ENCODE measurements at regions of chr1 and their contacts with region 1.

Region 1: GRCh38 chr1:81800695-81801650 is at the start of gene ADGRL2:
- DNase-seq: peak; percentile 89
- total RNA-seq, gene ADGRL2: 40.6 to 58.9 TPM

Region 2: DNA sequence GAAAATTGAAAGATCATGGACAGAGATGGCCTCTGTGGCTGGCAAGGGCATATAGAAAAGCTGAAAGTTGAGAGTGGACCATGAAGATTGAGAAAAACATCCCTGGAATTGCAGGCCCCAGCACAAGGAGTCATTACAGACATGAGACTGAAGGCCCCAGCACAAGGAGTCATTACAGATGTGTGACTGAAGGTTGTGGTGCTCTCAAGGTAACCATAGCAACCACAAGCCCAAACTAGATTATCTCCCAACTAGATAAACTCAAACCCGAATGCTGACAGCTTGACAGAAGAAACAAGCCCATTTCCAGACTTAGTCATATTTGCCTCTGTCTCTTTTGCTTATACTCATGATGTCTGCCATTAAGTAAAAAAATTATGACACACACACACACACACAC is 1542.3 kb before region 1 on chr1:
- intact Hi-C with region 1: no loop called
- DNase-seq: no peak

Region 3: GRCh38 chr1:81950591-81951244 is 149.7 kb after region 1 on chr1:
- intact Hi-C with region 1: loop called in 1 of 2 experiments (anchors 10 kb)
- DNase-seq: no peak

Region 4: DNA sequence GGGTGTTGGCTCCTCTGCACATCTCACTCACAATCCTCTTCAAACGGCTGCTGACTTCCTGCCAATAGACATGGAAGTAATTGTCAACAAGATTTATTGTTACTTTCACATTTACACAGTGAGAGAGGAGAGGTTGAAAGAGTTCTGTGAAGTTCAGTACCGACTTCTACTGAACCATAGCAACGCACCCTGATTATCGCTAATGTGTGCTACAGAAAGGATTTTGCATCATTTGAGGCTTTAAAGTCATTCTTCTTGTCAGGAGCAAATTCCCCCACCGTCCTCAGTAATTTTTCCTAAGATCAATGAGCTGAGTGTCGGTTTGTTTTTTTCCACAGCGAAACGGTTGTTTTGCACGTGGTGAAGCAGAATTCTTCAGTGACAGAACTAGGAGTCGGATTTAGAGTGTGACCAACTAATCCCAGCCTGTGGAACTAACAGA is 360.7 kb after region 1 on chr1:
- intact Hi-C with region 1: loop called in 1 of 2 experiments (anchors 10 kb)
- DNase-seq: no peak

Region 5: GRCh38 chr1:82225421-82226185 is 424.6 kb after region 1 on chr1:
- intact Hi-C with region 1: loop called in 1 of 2 experiments (anchors 10 kb)
- DNase-seq: no peak